ENCODE measurements at regions of chr20 and their contacts with region 1.

Region 1: GRCh38 chr20:62136283-62137091 is 6.7 kb downstream of the PSMA7 start:
- DNase-seq: peak; percentile 43
- H3K4me3 ChIP-seq: no peak overlapping the region
- H3K27ac ChIP-seq: no peak overlapping the region
- H3K4me1 ChIP-seq: peaks cover 9% of the 10 kb centered on the region
- H3K27me3 ChIP-seq: no peaks in the 10 kb centered on the region
- CTCF ChIP-seq: peak; percentile 85 to 86

Region 2: GRCh38 chr20:61980700-61981583 is 155.5 kb before region 1 on chr20:
- CTCF ChIA-PET with region 1: no interaction called
- dilution Hi-C with region 1: no loop called
- in situ Hi-C with region 1: no loop called
- intact Hi-C with region 1: loop called (anchors 1 kb)
- DNase-seq: no peak
- H3K4me3 ChIP-seq: no peak overlapping the region
- H3K27ac ChIP-seq: no peak overlapping the region
- H3K4me1 ChIP-seq: no peaks in the 10 kb centered on the region
- H3K27me3 ChIP-seq: no peaks in the 10 kb centered on the region
- CTCF ChIP-seq: peak; percentile 47 to 66

Region 3: DNA sequence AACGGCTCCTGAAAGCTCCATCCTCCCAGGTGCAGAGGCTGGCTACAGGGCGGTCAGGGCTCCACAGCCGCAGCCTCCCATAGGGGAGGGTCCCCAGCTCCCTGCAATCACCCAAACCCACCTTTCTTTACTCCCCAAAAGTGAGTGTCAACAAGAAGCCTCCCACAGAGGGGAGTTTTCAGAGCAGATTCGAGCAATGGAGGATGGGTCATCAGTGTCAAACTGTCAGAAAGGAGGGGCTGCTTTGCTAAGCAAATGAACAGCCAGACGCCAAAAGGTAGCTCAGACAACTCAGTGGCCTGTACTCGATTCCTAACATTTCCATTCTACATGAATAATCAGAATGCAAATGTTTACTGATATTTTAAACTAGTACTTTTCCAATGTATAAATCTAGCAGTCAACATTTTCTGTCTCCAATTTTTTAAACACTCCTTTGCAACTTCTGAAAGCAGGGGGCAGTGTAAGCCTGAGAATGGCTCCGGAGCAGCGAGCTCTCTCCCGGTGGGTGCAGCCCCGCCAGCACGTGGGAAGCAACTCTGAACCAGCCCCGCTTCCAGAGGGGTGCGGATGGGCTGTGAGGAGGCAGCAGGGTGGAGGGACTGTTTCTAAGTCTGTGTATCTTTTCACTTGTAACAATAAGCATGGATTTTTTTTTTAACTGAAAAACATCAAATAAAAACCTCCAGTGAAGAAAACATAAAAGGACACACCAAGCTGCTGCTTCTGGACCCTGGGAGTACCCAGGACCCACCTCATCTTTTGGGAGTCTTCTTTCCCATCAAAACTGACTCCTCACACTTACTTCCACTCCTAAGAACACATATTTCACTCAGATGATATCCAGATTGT is 125.7 kb before region 1 on chr20:
- CTCF ChIA-PET with region 1: no interaction called
- dilution Hi-C with region 1: no loop called
- in situ Hi-C with region 1: loop called in 1 of 2 experiments (anchors 10 kb)
- intact Hi-C with region 1: loop called (anchors 1 kb)
- DNase-seq: peak; percentile 10
- H3K4me3 ChIP-seq: no peak overlapping the region
- H3K27ac ChIP-seq: no peak overlapping the region
- H3K4me1 ChIP-seq: peaks cover 3% of the 10 kb centered on the region
- H3K27me3 ChIP-seq: no peaks in the 10 kb centered on the region
- CTCF ChIP-seq: peak; percentile 35 to 69

Region 4: GRCh38 chr20:62065669-62066338 is 70.7 kb before region 1 on chr20 and contains the start of gene TAF4:
- CTCF ChIA-PET with region 1: no interaction called
- dilution Hi-C with region 1: no loop called
- in situ Hi-C with region 1: no loop called
- intact Hi-C with region 1: loop called (anchors 2 kb)
- DNase-seq: peak; percentile 61
- H3K4me3 ChIP-seq: peak within 1 kb of the TSS; percentile 66 to 78 (median 75)
- H3K27ac ChIP-seq: peak within 1 kb of the TSS; percentile 24
- H3K4me1 ChIP-seq: peaks cover 23% of the 10 kb centered on the region
- H3K27me3 ChIP-seq: no peaks in the 10 kb centered on the region
- CTCF ChIP-seq: no peak
- total RNA-seq, gene TAF4: 4.5 to 15.0 TPM

Region 5: GRCh38 chr20:62227977-62228958 is 91.8 kb after region 1 on chr20:
- CTCF ChIA-PET with region 1: no interaction called
- dilution Hi-C with region 1: no loop called
- in situ Hi-C with region 1: no loop called
- intact Hi-C with region 1: no loop called
- DNase-seq: no peak
- H3K4me3 ChIP-seq: no peak overlapping the region
- H3K27ac ChIP-seq: no peak overlapping the region
- H3K4me1 ChIP-seq: no peaks in the 10 kb centered on the region
- H3K27me3 ChIP-seq: peaks cover 5% of the 10 kb centered on the region
- CTCF ChIP-seq: no peak